GM23248 (cell line): ENCODE measurements at regions of chr9 and their contacts with region 1.

Region 1: GRCh38 chr9:18255158-18255629 is 218.8 kb upstream of the ADAMTSL1 start:
- DNase-seq: peak; percentile 89
- H3K4me3 ChIP-seq: no peak overlapping the region
- H3K27ac ChIP-seq: peak overlapping the region; percentile 8; the same call in 1 of the 2 replicates
- H3K4me1 ChIP-seq: peaks cover 17% of the 10 kb centered on the region
- H3K27me3 ChIP-seq: no peaks in the 10 kb centered on the region

Region 2: DNA sequence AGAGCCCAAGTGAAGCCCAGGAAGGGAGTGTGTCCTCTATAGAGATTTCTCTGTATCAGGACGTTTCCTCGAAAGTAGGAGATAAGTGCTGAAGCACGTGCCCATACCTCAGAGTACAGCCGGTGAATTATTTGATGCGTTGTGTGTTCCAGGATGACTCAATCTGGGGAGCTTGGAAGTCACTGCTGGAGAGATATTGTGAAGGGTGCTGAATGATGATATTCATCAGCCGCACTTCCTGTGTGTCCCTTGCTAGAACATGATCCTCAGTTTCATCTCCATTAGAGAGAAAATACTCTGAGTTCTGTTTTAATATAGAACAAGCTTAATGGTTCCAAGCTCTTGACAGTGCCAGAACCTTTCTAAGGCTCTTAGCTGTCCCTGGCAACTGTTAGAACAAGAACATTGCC is 183.5 kb before region 1 on chr9:
- in situ Hi-C with region 1: no loop called
- DNase-seq: peak; percentile 38
- H3K4me3 ChIP-seq: no peak overlapping the region
- H3K27ac ChIP-seq: no peak overlapping the region
- H3K4me1 ChIP-seq: peaks cover 15% of the 10 kb centered on the region
- H3K27me3 ChIP-seq: no peaks in the 10 kb centered on the region

Region 3: GRCh38 chr9:18442629-18443491 is 187.7 kb after region 1 on chr9:
- in situ Hi-C with region 1: loop called (anchors 25 kb)
- DNase-seq: peak; percentile 86
- H3K4me3 ChIP-seq: no peak overlapping the region
- H3K27ac ChIP-seq: 0 out of 2 replicates have a peak overlapping the region, but pooled peaks have one; percentile 3
- H3K4me1 ChIP-seq: peaks cover 49% of the 10 kb centered on the region
- H3K27me3 ChIP-seq: no peaks in the 10 kb centered on the region

Region 4: GRCh38 chr9:18721267-18721994 is 466.2 kb after region 1 on chr9:
- in situ Hi-C with region 1: loop called (anchors 25 kb)
- DNase-seq: peak; percentile 52
- H3K4me3 ChIP-seq: no peak overlapping the region
- H3K27ac ChIP-seq: peak overlapping the region; percentile 67
- H3K4me1 ChIP-seq: peaks cover 38% of the 10 kb centered on the region
- H3K27me3 ChIP-seq: no peaks in the 10 kb centered on the region

Region 5: GRCh38 chr9:19018201-19018600 is 763.0 kb after region 1 on chr9:
- in situ Hi-C with region 1: loop called (anchors 10 kb)
- DNase-seq: no peak
- H3K4me3 ChIP-seq: no peak overlapping the region
- H3K27ac ChIP-seq: no peak overlapping the region
- H3K4me1 ChIP-seq: no peaks in the 10 kb centered on the region
- H3K27me3 ChIP-seq: no peaks in the 10 kb centered on the region